ENCODE measurements at regions of chr12 and their contacts with region 1.

Region 1: GRCh38 chr12:77725611-77726010 is 105.1 kb upstream of the NAV3 start:
- DNase-seq: no peak
- ATAC-seq: no peak

Region 2: DNA sequence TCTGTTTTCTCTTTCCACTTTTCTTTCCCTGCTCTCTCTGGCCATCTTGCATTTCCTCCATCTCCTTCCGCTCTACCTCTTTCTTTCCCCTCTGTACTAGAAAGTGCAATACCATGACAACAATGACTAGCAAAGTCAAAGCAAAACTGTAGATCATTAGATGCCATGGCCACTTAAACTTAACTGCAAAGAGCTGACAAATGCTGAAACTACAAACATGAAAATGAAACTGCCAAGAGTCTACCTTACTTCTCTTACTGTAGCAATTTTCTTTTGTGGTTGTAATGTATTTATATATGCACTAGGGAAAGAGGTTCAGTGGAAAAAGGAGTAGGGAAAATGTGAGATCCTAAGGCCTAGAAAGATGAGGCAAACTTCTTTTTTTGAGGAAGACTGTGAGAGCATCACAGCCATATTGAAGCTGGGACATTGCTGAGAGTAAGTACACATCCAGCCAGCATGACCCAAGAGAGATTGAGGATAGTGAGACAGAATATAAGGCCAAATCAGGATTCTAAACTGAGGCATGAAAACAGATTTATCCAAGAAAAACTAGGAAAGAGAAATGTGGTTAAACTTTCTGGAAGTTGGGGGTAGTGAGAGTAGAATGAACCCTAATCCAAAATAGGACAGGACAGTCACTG is 171.5 kb before region 1 on chr12:
- intact Hi-C with region 1: no loop called
- DNase-seq: no peak
- ATAC-seq: no peak

Region 3: DNA sequence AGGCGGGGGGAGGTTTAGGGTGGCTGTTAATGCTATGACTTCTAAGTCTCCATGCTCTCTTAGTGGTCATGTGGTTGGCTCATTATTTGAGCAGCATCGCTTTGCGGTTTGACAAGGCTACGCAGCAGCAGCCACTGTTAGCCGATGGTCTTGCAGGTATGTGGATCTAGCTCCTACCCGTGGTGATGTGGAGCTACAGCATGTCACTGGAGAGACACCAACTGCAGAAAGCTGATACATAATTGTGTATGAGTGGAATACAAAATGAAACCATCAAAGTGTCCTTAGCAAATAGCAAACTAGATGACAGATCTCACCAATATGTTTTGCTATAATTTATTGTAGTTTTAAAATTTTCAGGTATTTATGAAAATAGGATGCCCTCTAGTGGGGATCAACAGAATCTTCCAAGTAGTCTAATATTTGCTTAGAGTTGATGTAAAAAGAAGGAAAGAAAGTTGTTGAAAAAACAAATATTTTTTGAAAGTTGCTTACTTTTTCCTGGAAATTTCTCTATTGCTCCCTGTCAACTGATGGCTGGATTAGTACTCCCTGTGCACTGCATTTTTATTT is 200.0 kb after region 1 on chr12:
- intact Hi-C with region 1: loop called in 1 of 2 experiments (anchors 5 kb)
- DNase-seq: peak; percentile 35 to 50
- ATAC-seq: peak; percentile 94